Left ventricle myocardium superior (tissue), 1 donor: ENCODE measurements at regions of chr14 and their contacts with region 1.

Region 1: GRCh38 chr14:77028384-77029231 is at the start of gene IRF2BPL:
- DNase-seq: peak; percentile 99
- ATAC-seq: peak; percentile 66
- total RNA-seq, gene IRF2BPL: 42.8 TPM

Region 2: GRCh38 chr14:76894308-76894892 is 134.2 kb before region 1 on chr14:
- intact Hi-C with region 1: no loop called
- DNase-seq: no peak
- ATAC-seq: no peak

Region 3: DNA sequence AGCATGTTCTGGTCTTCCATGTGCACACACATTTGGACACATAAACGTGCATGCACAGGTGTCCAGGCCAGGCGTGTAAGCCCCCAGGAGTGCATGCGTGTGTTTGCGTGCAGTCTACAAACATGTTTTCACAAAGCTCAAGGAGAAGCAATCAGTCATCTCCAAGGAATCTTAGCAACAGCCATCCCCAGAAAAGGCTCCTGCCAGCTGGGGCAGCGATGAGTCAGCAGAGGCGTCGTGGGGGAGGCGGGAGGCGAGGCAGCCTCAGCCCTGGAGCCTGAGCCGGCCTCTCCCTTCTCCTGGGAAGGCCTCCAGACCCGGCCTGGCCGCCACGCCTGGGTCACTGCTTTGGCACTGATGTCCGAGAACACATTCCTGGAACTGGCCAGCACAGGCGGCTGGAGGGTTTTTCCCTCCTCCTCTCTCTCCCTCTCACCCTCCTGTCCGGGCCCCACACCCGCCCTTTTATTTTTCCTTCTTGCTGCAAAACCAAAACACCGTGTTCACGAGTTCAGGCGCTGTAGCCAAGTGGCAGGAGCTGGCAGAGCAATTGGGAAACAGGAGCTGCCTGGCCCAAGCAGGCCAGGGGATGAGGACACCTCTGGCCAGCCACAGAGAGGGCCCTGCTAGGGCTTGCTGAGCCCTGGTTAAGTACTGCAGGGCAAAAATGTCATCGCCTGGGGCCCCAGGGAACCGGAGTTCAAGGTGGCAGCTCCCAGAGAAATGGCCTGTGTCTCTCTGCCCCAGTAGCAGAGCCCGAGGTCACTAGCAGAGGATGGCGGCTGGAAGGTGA is 109.7 kb before region 1 on chr14:
- intact Hi-C with region 1: loop called (anchors 10 kb)
- DNase-seq: peak; percentile 97
- ATAC-seq: peak; percentile 87

Region 4: DNA sequence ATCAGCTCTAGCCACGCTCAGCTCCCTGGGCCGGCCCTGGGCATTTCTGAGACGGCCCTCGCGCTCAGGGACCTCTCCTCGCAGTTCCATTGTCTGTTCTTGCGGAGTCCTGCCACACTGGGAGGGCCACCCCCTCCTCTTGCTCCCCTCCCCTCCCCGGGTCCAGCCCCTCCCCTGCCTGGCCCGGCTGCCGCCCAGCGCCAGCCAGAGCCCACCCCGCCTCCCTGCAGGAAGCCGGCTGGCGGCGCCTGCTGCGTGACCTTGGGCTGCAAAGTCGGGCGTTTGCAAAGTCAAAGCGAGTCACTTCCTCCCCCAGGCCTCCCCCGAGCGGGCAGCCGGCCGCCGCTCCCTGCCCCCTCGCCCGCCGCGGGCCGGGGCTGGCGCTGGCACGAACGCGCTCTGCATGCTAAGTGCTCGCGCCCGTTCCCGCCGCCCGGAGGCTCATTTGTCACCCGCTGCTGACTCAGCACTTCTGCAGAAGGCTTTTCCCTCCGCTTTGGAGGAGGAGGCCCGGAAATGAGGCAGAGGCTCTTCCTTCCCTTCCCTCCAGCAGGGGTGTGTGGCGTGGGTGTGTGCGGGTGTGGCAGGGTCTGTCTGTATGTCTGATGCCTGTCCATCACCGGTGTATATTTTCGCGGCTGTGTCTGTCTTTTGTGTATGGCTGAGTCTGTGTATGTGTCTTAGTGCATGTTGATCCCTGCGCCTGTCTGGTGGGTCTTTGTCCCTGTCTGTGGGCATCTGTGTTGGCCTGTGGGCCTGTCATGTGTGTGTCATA is 72.1 kb before region 1 on chr14:
- intact Hi-C with region 1: loop called (anchors 10 kb)
- DNase-seq: peak; percentile 92
- ATAC-seq: peak; percentile 84